Mammary epithelial cell (primary cell): ENCODE measurements at regions of chr17 and their contacts with region 1.

Region 1: DNA sequence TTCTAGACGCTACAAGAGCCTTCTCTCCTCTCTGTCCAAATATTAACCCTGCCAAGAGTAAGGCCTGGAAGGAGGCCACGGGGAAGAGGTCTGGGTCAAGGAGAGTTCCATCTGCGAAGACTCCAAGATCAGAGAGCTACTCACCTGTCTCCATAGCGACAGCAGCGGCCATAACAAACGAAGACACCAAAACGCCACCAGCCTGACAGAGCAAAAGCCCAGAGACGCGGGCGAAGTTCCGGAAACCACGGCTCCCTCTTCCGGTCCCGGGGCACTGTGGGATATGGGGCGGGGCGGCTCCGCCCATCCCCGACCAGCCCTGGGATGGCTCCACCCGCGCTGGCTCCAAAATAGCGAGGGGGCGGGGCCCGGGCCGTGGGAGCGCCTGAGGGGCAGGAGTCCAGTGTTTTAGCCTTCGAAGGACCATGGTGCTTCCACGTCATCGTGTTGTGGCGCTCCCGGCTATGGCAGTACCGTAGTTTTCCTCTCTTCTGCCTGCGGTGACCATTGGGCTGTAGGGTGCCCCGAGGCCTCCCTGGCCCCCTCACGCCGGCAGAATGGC is at the starts of genes C17orf100 and MED31:
- DNase-seq: peak; percentile 92
- H3K4me3 ChIP-seq: peak within 1 kb of the TSS; percentile 83 to 100 (median 99)
- H3K27ac ChIP-seq: peak within 1 kb of the TSS; percentile 100
- H3K4me1 ChIP-seq: peaks cover 38% of the 10 kb centered on the region
- H3K27me3 ChIP-seq: no peaks in the 10 kb centered on the region
- CTCF ChIP-seq: no peak
- total RNA-seq, gene C17orf100: 0.67 to 2.5 TPM
- total RNA-seq, gene MED31: 8.3 to 21.0 TPM

Region 2: GRCh38 chr17:5446786-5447185 is 1204.7 kb before region 1 on chr17:
- CTCF ChIA-PET with region 1: no interaction called
- dilution Hi-C with region 1: no loop called
- in situ Hi-C with region 1: no loop called
- intact Hi-C with region 1: loop called (anchors 5 kb)
- DNase-seq: no peak
- H3K4me3 ChIP-seq: no peak overlapping the region
- H3K27ac ChIP-seq: no peak overlapping the region
- H3K4me1 ChIP-seq: no peaks in the 10 kb centered on the region
- H3K27me3 ChIP-seq: no peaks in the 10 kb centered on the region
- CTCF ChIP-seq: no peak

Region 3: DNA sequence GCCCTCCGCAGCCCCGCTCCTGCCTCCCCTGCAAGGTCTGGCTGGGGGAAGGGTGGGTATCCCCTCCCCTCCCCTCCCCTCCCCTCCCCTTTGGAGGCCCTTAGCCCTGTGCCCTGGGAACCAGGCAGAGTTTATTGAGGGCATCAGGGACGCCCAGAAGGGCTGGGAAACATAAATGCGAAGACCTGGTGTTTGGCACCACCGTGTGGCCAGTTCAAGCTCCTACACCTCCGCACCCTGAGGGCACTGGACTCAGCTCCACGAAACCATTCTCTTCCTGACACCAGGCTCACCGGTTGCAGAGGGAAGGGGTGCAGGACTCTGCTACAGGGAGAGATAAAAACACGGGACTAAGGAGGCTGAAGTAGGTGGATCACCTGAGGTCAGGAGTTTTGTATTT is 215.5 kb before region 1 on chr17:
- CTCF ChIA-PET with region 1: interaction called, 3 read pairs
- dilution Hi-C with region 1: no loop called
- in situ Hi-C with region 1: no loop called
- intact Hi-C with region 1: loop called (anchors 1 kb)
- DNase-seq: peak; percentile 43
- H3K4me3 ChIP-seq: no peak overlapping the region
- H3K27ac ChIP-seq: no peak overlapping the region
- H3K4me1 ChIP-seq: no peaks in the 10 kb centered on the region
- H3K27me3 ChIP-seq: no peaks in the 10 kb centered on the region
- CTCF ChIP-seq: peak; percentile 75 to 83

Region 4: GRCh38 chr17:6831661-6832263 is 180.3 kb after region 1 on chr17 and contains the start of gene TEKT1:
- CTCF ChIA-PET with region 1: no interaction called
- dilution Hi-C with region 1: no loop called
- in situ Hi-C with region 1: loop called in 1 of 2 experiments (anchors 25 kb)
- intact Hi-C with region 1: no loop called
- DNase-seq: peak; percentile 76
- H3K4me3 ChIP-seq: peak within 1 kb of the TSS; percentile 36 to 57 (median 54)
- H3K27ac ChIP-seq: peak within 1 kb of the TSS; percentile 31
- H3K4me1 ChIP-seq: peaks cover 6% of the 10 kb centered on the region
- H3K27me3 ChIP-seq: peaks cover 2% of the 10 kb centered on the region
- CTCF ChIP-seq: no peak
- total RNA-seq, gene TEKT1: not detected

Region 5: GRCh38 chr17:6853764-6854442 is 202.5 kb after region 1 on chr17:
- CTCF ChIA-PET with region 1: no interaction called
- dilution Hi-C with region 1: loop called (anchors 25 kb)
- in situ Hi-C with region 1: loop called in 1 of 2 experiments (anchors 25 kb)
- intact Hi-C with region 1: no loop called
- DNase-seq: peak; percentile 79
- H3K4me3 ChIP-seq: peak overlapping the region; percentile 58 to 59 (median 59)
- H3K27ac ChIP-seq: peak overlapping the region; percentile 94
- H3K4me1 ChIP-seq: peaks cover 14% of the 10 kb centered on the region
- H3K27me3 ChIP-seq: no peaks in the 10 kb centered on the region
- CTCF ChIP-seq: peak; percentile 55 to 72